ENCODE measurements at regions of chr3 and their contacts with region 1.

Region 1: GRCh38 chr3:55485211-55485791 is 1.8 kb downstream of the WNT5A start:
- DNase-seq: peak in 1 of 2 experiments; percentile 79
- H3K4me3 ChIP-seq: peak overlapping the region; percentile 58; the same call in 1 of the 2 replicates
- H3K27ac ChIP-seq: peak overlapping the region; percentile 73
- H3K4me1 ChIP-seq: peaks cover 6% of the 10 kb centered on the region
- H3K27me3 ChIP-seq: no peaks in the 10 kb centered on the region
- CTCF ChIP-seq: peak; percentile 27

Region 2: GRCh38 chr3:54870423-54870822 is 614.9 kb before region 1 on chr3:
- CTCF ChIA-PET with region 1: no interaction called
- POLR2A ChIA-PET with region 1: no interaction called
- intact Hi-C with region 1: loop called (anchors 2 kb)
- DNase-seq: peak; percentile 48 to 72
- H3K4me3 ChIP-seq: no peak overlapping the region
- H3K27ac ChIP-seq: no peak overlapping the region; the same call in 1 of the 2 replicates
- H3K4me1 ChIP-seq: peaks cover 17% of the 10 kb centered on the region
- H3K27me3 ChIP-seq: no peaks in the 10 kb centered on the region
- CTCF ChIP-seq: peak; percentile 68

Region 3: GRCh38 chr3:55097441-55097840 is 387.9 kb before region 1 on chr3:
- CTCF ChIA-PET with region 1: no interaction called
- POLR2A ChIA-PET with region 1: no interaction called
- intact Hi-C with region 1: no loop called
- DNase-seq: no peak
- H3K4me3 ChIP-seq: no peak overlapping the region
- H3K27ac ChIP-seq: no peak overlapping the region
- H3K4me1 ChIP-seq: no peaks in the 10 kb centered on the region
- H3K27me3 ChIP-seq: no peaks in the 10 kb centered on the region
- CTCF ChIP-seq: no peak

Region 4: DNA sequence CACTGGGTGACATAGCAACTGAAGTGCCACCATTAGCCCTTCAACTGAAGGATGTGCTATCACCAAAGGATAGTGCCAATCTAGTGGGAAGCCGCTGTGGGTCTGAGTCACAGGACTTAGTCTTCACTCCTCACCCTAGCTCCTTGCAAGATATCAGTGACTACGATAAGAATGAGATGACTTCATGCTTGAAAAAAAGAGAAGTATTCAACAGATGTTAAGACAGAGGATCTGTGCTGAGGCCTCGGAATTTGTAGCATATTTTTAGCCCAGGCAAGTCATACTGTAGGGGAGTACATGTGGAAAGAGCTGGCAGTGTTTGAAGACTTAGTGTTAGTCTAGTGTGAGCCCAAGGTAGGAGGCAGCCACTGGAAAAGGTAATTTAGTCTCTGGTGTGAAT is 286.8 kb before region 1 on chr3:
- CTCF ChIA-PET with region 1: interaction called, 13 read pairs
- POLR2A ChIA-PET with region 1: no interaction called
- intact Hi-C with region 1: loop called (anchors 10 kb)
- DNase-seq: no peak
- H3K4me3 ChIP-seq: no peak overlapping the region
- H3K27ac ChIP-seq: no peak overlapping the region
- H3K4me1 ChIP-seq: peaks cover 8% of the 10 kb centered on the region
- H3K27me3 ChIP-seq: no peaks in the 10 kb centered on the region
- CTCF ChIP-seq: no peak

Region 5: GRCh38 chr3:55519019-55519418 is 33.7 kb after region 1 on chr3:
- CTCF ChIA-PET with region 1: no interaction called
- POLR2A ChIA-PET with region 1: interaction called, 8 read pairs
- intact Hi-C with region 1: loop called (anchors 1 kb)
- DNase-seq: peak; percentile 48 to 86
- H3K4me3 ChIP-seq: no peak overlapping the region
- H3K27ac ChIP-seq: peak overlapping the region; percentile 97
- H3K4me1 ChIP-seq: peaks cover 37% of the 10 kb centered on the region
- H3K27me3 ChIP-seq: no peaks in the 10 kb centered on the region
- CTCF ChIP-seq: no peak

Region 6: DNA sequence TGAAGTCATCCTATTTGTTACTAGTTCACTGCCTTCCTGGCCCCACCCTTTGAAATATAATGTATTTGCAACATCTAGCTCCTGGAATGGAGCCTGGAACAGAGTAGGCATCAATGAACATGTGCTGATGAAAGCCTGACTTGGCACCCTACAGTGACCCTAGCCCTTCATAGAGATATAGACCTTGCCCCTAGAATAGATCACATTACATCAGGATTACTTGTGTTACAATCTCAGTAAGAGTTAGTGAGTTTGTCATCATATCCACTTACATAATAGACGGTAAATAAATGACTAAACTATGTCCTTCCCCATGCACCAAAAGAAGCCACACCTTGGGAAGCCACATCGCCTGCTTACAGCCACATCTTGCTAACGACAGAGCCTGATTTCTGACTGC is 112.3 kb after region 1 on chr3:
- CTCF ChIA-PET with region 1: no interaction called
- POLR2A ChIA-PET with region 1: interaction called, 9 read pairs
- intact Hi-C with region 1: loop called (anchors 1 kb)
- DNase-seq: peak; percentile 67 to 99
- H3K4me3 ChIP-seq: peak overlapping the region; percentile 63; the same call in 1 of the 2 replicates
- H3K27ac ChIP-seq: peak overlapping the region; percentile 99
- H3K4me1 ChIP-seq: peaks cover 68% of the 10 kb centered on the region
- H3K27me3 ChIP-seq: no peaks in the 10 kb centered on the region
- CTCF ChIP-seq: no peak

Region 7: GRCh38 chr3:55721716-55722484 is 236.6 kb after region 1 on chr3:
- CTCF ChIA-PET with region 1: no interaction called
- POLR2A ChIA-PET with region 1: no interaction called
- intact Hi-C with region 1: loop called (anchors 1 kb)
- DNase-seq: peak in 1 of 2 experiments; percentile 53
- H3K4me3 ChIP-seq: no peak overlapping the region
- H3K27ac ChIP-seq: 0 out of 2 replicates have a peak overlapping the region, but pooled peaks have one; percentile 20
- H3K4me1 ChIP-seq: peaks cover 16% of the 10 kb centered on the region
- H3K27me3 ChIP-seq: no peaks in the 10 kb centered on the region
- CTCF ChIP-seq: peak; percentile 65